Activated naive CD4-positive, alpha-beta T cell treated with anti-CD3 and anti-CD28 coated beads for 36 hours (primary cell): ENCODE measurements at regions of chr3 and their contacts with region 1.

Region 1: DNA sequence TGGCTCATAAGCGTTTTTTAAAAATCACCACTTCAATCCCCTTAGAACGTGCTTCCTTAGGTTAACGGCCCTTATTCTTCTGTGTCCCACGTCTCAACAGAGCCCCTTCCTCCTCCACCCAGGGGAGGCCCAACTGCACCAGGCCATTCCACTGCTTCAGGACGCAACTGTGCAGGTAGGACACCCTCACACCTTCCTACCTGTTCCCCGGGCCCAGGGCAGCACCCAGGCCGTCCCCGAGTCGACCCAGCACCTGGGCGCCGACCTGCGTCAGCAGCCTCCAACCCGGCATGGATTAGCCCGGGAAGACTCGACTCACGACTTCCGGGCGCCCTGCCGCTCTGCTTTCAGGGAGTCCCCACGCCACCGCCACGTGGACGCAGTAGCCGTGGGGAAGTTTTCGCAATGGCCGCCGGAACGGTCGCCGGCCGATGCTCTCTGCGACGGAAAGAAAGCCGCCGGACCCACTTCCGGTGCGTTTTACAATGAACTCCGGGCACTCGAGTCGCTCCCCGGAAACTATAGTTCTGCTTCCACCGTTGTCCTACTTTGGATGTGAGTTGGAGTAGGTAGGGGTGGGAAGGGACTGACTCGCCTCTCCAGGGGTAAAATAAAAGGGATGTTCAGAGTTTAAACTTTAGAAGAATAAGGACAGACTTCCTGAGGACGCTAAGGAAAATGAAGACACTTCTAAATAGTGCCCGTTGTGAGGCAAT is at the start of gene MRPL3:
- DNase-seq: peak; percentile 90
- H3K4me3 Mint-ChIP-seq: peak within 1 kb of the TSS; percentile 91
- H3K27ac Mint-ChIP-seq: peak within 1 kb of the TSS; percentile 88
- H3K4me1 Mint-ChIP-seq: peaks cover 37% of the 10 kb centered on the region
- H3K27me3 Mint-ChIP-seq: no peaks in the 10 kb centered on the region
- total RNA-seq, gene MRPL3: 151 to 161 TPM

Region 2: DNA sequence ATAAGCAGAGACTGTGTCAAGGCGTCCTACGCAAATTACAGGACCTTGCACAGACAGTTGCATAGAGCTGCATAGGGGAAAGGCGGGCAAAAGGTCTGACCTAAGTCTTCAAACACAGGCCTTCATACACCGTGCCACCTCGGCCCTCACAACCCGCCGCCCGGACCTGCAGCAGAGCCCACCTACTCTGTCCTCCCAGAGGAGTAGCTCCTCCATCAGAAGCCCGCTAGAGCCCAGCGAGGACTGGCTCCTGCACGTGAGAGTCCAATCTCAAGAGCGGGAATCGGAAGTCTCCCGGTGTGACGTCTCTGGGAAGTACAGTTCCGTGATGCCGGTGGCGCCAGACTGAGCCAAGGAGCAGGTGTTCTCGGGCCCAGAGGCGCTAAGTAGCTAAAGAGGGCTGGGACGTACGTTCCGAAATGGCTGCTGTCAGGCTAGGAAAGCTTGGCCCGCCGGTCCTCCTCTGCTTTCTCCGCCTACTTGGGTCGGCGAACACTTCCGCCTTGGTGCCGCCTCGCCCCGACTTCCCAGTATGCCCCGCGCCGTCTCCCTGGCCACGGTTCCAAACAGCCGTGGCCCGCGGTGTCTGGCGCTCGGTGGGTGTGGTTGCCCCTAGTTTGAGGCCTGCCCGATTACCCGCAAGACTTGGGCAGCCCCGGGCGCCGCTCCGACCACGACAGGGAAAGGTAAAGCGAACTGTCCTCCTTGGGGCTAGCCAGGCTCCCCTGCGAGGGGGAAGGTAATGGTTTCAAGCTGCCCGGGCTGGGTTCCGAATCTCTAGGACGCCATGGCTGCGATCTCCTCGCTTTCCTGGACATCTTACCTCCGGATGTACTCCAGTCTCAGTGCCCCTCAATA is 476.1 kb before region 1 on chr3 and contains the starts of genes ASTE1 and NEK11:
- CTCF ChIA-PET with region 1: no interaction called
- intact Hi-C with region 1: loop called (anchors 1 kb)
- DNase-seq: peak; percentile 92
- H3K4me3 Mint-ChIP-seq: peak within 1 kb of the TSS; percentile 92
- H3K27ac Mint-ChIP-seq: peak within 1 kb of the TSS; percentile 94
- H3K4me1 Mint-ChIP-seq: peaks cover 42% of the 10 kb centered on the region
- H3K27me3 Mint-ChIP-seq: no peaks in the 10 kb centered on the region
- total RNA-seq, gene ASTE1: 10.8 to 11.2 TPM
- total RNA-seq, gene NEK11: 1.1 to 1.9 TPM

Region 3: GRCh38 chr3:131526801-131527347 is 24.2 kb after region 1 on chr3:
- CTCF ChIA-PET with region 1: no interaction called
- intact Hi-C with region 1: no loop called
- DNase-seq: peak; percentile 31
- H3K4me3 Mint-ChIP-seq: no peak overlapping the region
- H3K27ac Mint-ChIP-seq: no peak overlapping the region
- H3K4me1 Mint-ChIP-seq: no peaks in the 10 kb centered on the region
- H3K27me3 Mint-ChIP-seq: peaks cover 44% of the 10 kb centered on the region